Right lobe of liver (tissue), 6 donors: ENCODE measurements at regions of chr3 and their contacts with region 1.

Region 1: DNA sequence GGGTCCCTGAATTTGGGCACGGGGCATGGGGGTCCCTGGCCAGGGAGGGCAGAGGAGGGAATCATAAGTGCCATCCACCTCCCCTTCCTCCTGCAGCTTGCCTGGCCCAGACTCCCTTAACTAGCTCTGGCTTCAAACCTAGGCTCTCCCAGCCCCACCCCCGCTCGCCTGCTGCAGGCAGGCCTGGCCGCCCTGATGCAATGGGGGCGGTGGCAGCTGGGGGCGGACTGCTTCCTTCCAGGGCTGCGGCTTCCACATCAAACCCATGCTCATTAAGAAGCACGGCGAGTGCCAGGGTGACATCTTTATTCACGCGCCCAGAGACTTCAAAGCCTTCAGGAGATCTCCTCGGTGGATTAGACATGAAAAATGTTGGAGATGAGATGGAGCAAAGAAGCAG is 123.1 kb downstream of the TPRA1 start:
- DNase-seq: no peak
- ATAC-seq: no peak
- H3K4me3 ChIP-seq: no peak overlapping the region
- H3K27ac ChIP-seq: no peak overlapping the region
- H3K4me1 ChIP-seq: no peaks in the 10 kb centered on the region
- H3K27me3 ChIP-seq: no peaks in the 10 kb centered on the region
- CTCF ChIP-seq: no peak
- POLR2A ChIP-seq: no peak

Region 2: DNA sequence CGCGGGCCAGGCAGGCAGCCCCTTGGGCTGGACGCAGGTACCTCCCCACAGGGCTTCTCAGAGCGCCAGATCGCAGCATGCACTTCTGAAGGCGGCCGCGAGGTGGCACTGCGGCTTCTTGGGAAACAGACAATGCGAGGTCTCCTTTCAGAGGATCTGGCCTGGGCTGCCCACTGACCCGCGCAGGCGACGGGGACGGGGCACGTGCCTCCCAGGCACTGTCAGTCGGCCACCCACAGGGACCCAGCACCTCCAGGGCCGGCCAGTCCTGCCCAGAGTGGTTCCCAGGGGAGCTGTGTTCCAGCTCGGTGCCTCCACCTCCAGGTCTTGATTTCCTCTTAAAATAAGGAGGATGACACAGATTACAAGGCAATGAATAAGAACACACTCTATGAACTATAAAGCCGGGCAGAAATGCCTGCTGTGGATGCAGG is 788.1 kb before region 1 on chr3:
- intact Hi-C with region 1: loop called in 1 of 2 experiments (anchors 10 kb)
- DNase-seq: peak; percentile 75 to 86 (median 78)
- ATAC-seq: peak; percentile 92 to 97 (median 96)
- H3K4me3 ChIP-seq: no peak overlapping the region
- H3K27ac ChIP-seq: no peak overlapping the region
- H3K4me1 ChIP-seq: no peaks in the 10 kb centered on the region
- H3K27me3 ChIP-seq: no peaks in the 10 kb centered on the region
- CTCF ChIP-seq: peak; percentile 91 to 99 (median 96)
- POLR2A ChIP-seq: no peak